ENCODE measurements at regions of chr3 and their contacts with region 1.

Region 1: GRCh38 chr3:66998113-66998903 is at the start of gene KBTBD8:
- DNase-seq: peak; percentile 92 to 99 (median 97)
- ATAC-seq: peak; percentile 94
- H3K4me3 ChIP-seq: peak within 1 kb of the TSS; percentile 62 to 94
- H3K4me3 Mint-ChIP-seq: peak within 1 kb of the TSS; percentile 86
- H3K27ac ChIP-seq: peak within 1 kb of the TSS; percentile 53 to 63
- H3K27ac Mint-ChIP-seq: peak within 1 kb of the TSS; percentile 92
- H3K4me1 ChIP-seq: peaks cover 10% of the 10 kb centered on the region
- H3K4me1 Mint-ChIP-seq: peaks cover 32% of the 10 kb centered on the region
- H3K27me3 ChIP-seq: no peaks in the 10 kb centered on the region
- H3K27me3 Mint-ChIP-seq: peaks cover 14% of the 10 kb centered on the region
- CTCF ChIP-seq: no peak
- total RNA-seq, gene KBTBD8: 9.5 to 12.1 TPM

Region 2: GRCh38 chr3:66047311-66048050 is 950.8 kb before region 1 on chr3:
- CTCF ChIA-PET with region 1: no interaction called
- POLR2A ChIA-PET with region 1: no interaction called
- intact Hi-C with region 1: no loop called
- DNase-seq: no peak
- ATAC-seq: no peak
- H3K4me3 ChIP-seq: no peak overlapping the region
- H3K4me3 Mint-ChIP-seq: no peak overlapping the region
- H3K27ac ChIP-seq: no peak overlapping the region
- H3K27ac Mint-ChIP-seq: no peak overlapping the region
- H3K4me1 ChIP-seq: no peaks in the 10 kb centered on the region
- H3K4me1 Mint-ChIP-seq: no peaks in the 10 kb centered on the region
- H3K27me3 ChIP-seq: no peaks in the 10 kb centered on the region
- H3K27me3 Mint-ChIP-seq: peaks cover 11% of the 10 kb centered on the region
- CTCF ChIP-seq: no peak

Region 3: DNA sequence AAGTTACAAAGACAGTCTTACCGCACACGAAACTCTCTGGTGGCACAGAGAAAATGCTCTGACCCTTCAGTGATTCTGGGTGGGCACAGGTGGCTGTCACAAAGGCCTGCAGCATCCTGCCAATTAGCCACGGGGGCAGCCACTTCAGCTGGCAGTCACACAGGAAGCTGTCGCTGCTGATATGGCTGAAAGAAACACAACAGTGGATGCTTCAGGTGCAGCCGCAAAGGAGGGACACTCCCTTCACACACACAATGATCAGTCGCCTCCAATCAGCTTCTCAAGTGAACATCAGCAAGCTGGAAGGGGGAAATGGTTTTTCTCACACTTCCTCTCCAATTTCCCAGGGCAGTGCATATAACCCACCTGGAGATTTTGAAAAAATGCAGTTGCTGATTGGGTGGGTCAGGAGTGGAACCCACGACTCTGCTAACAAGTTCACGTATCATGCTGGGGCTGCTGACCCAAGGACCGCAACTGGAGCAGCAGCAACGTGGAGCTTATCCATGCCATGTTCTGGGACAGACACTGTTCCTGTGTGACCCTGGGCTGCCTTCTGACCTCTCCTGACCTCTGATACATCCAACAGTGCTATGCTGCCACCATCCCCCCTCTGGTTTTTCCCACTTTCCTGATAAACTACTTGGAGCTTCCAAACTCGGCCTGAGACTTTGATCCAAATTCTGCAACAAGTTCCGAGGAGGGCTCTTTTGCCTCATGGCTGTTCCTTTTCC is 604.1 kb before region 1 on chr3:
- CTCF ChIA-PET with region 1: no interaction called
- POLR2A ChIA-PET with region 1: no interaction called
- intact Hi-C with region 1: loop called in 1 of 2 experiments (anchors 10 kb)
- DNase-seq: peak; percentile 32 to 84 (median 60)
- ATAC-seq: peak; percentile 93
- H3K4me3 ChIP-seq: peak overlapping the region; percentile 16 to 35
- H3K4me3 Mint-ChIP-seq: peak overlapping the region; percentile 85
- H3K27ac ChIP-seq: peak overlapping the region; percentile 57 to 72
- H3K27ac Mint-ChIP-seq: peak overlapping the region; percentile 95
- H3K4me1 ChIP-seq: peaks cover 24% of the 10 kb centered on the region
- H3K4me1 Mint-ChIP-seq: peaks cover 56% of the 10 kb centered on the region
- H3K27me3 ChIP-seq: no peaks in the 10 kb centered on the region
- H3K27me3 Mint-ChIP-seq: no peaks in the 10 kb centered on the region
- CTCF ChIP-seq: no peak

Region 4: DNA sequence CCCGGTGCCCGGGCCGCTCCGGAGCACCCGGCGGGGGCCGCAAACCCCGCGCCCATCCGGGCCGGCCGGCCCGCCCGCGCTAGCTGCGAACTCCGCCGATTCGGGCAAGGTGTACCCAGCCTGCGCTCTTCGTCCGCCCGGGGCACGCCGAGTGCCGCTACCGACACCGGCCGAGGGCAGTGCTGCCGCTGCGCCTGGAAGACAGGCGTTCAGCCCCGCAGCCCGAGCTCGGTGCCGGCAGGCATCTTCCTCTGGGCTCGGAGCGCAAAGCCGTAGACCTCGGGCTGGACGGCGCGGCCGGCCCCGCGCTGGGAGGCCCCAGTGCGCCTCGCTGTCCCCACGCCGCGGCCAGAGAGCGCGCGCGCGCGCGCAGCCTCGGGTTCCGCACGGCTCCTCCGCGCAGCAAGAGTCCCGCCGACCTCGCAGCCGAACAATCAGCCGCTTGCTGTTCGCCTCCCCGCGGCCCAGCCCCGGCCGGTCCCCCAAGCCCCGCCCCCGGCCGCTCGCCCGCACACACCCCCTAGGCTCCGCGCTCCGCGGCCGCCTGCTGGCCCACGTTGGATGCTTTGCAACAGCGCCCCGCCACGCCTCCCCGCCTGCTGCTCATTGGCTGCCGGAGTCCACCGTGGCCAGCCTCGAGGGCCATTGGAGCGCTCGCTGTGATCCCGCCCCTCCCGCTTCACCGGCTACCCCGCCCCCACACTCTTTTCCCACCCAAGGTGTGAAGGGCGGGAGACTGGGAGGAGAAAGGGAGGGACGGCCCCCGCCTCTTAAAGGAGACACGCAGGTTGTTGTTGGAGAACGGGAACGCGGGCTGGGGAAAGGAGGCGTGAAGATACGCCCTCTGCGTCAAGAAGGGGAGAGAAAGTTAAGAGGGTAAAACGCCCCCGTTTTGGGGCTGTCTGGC is 497.5 kb before region 1 on chr3 and contains the start of gene LRIG1:
- CTCF ChIA-PET with region 1: no interaction called
- POLR2A ChIA-PET with region 1: no interaction called
- intact Hi-C with region 1: loop called in 1 of 2 experiments (anchors 1 kb)
- DNase-seq: peak; percentile 95 to 98 (median 97)
- ATAC-seq: peak; percentile 94
- H3K4me3 ChIP-seq: peak within 1 kb of the TSS; percentile 54 to 66
- H3K4me3 Mint-ChIP-seq: peak within 1 kb of the TSS; percentile 94
- H3K27ac ChIP-seq: peak within 1 kb of the TSS in 1 of 2 experiments; percentile 29
- H3K27ac Mint-ChIP-seq: peak within 1 kb of the TSS; percentile 69
- H3K4me1 ChIP-seq: peaks cover 35% of the 10 kb centered on the region
- H3K4me1 Mint-ChIP-seq: peaks cover 60% of the 10 kb centered on the region
- H3K27me3 ChIP-seq: peaks cover 0 to 4% of the 10 kb centered on the region in 2 experiments
- H3K27me3 Mint-ChIP-seq: peaks cover 8% of the 10 kb centered on the region
- CTCF ChIP-seq: peak; percentile 54
- total RNA-seq, gene LRIG1: 38.2 to 39.4 TPM

Region 5: DNA sequence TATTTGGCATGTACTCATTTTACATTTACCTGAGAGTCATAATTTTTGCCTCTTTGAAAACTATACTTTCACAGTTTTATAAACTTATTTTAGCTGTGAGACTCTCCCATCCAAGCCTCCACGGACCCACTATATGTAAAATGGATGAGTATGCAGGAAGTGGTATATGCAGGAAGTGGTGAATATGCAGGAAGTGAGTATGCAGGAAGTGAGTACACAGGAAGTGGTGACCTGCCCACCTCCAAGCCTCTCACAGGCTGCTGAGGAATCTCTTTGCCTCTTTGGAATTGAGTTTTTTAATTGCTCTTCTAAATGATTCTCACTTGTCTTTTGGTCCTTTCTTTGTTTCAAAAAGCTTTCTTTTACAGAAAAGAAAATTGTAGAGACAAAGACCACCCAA is 85.0 kb after region 1 on chr3:
- CTCF ChIA-PET with region 1: no interaction called
- POLR2A ChIA-PET with region 1: no interaction called
- intact Hi-C with region 1: loop called in 1 of 2 experiments (anchors 1 kb)
- DNase-seq: peak in 8 of 9 experiments; percentile 7 to 78 (median 46)
- ATAC-seq: peak; percentile 95
- H3K4me3 ChIP-seq: peak overlapping the region in 1 of 2 experiments; percentile 29
- H3K4me3 Mint-ChIP-seq: peak overlapping the region; percentile 70
- H3K27ac ChIP-seq: peak overlapping the region; percentile 16 to 59
- H3K27ac Mint-ChIP-seq: peak overlapping the region; percentile 86
- H3K4me1 ChIP-seq: peaks cover 19% of the 10 kb centered on the region
- H3K4me1 Mint-ChIP-seq: peaks cover 22% of the 10 kb centered on the region
- H3K27me3 ChIP-seq: no peaks in the 10 kb centered on the region
- H3K27me3 Mint-ChIP-seq: no peaks in the 10 kb centered on the region
- CTCF ChIP-seq: no peak

Region 6: DNA sequence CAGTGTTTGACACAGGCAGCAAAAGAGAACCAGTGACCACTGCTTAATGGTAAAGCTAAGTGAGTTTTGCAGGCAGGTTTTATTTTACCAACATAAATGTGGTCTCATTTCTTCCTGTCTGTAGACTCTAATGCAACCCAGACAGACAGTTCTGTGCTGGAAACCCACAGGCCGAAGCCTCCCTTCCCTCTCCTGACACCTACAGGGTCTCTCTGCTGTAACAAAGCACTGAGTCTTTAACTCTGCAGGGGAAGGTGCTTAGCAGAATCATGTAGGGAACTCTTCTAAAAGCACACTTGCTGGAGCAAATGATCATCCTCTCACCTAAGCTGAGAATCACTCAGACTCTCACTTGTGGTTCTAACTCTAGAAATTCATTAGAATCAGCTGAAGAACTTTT is 200.1 kb after region 1 on chr3:
- CTCF ChIA-PET with region 1: no interaction called
- POLR2A ChIA-PET with region 1: no interaction called
- intact Hi-C with region 1: no loop called
- DNase-seq: no peak
- ATAC-seq: no peak
- H3K4me3 ChIP-seq: no peak overlapping the region
- H3K4me3 Mint-ChIP-seq: no peak overlapping the region
- H3K27ac ChIP-seq: no peak overlapping the region
- H3K27ac Mint-ChIP-seq: no peak overlapping the region
- H3K4me1 ChIP-seq: no peaks in the 10 kb centered on the region
- H3K4me1 Mint-ChIP-seq: no peaks in the 10 kb centered on the region
- H3K27me3 ChIP-seq: no peaks in the 10 kb centered on the region
- H3K27me3 Mint-ChIP-seq: no peaks in the 10 kb centered on the region
- CTCF ChIP-seq: no peak

Region 7: DNA sequence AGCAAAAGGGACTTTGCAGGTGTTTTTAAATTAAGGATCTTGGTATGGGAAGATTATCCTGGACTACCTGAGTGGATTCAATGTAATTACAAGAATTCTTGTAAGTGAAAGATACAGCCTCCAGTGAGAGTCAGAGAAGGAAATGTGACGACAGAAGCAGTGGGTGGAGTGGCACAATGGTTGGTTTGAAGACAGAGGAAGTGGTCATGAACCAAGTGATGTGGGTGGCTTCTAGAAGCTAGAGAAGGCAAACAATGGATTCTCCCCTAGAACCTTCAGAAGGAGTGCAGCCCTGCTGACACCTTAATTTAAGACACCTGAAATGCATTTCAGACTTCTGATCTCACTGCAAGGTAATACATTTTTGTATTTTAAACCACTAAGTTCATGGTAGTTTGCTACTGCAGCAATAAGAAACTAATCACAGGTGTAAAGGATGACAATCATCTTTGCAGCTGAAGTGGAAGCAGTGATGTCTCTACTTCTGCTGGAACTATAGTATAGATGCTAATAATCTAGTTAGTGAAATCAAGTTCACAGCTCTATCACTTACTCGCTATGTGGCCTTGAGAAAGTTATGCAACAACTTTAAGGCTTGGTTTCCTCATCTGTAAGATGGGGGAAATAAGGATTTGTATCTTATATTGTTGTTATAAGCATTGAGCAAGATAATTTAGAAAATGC is 1059.5 kb after region 1 on chr3:
- CTCF ChIA-PET with region 1: no interaction called
- POLR2A ChIA-PET with region 1: interaction called, 3 read pairs
- intact Hi-C with region 1: loop called in 1 of 2 experiments (anchors 1 kb)
- DNase-seq: peak; percentile 33 to 91 (median 66)
- ATAC-seq: peak; percentile 98
- H3K4me3 ChIP-seq: peak overlapping the region in 1 of 2 experiments; percentile 38
- H3K4me3 Mint-ChIP-seq: peak overlapping the region; percentile 59
- H3K27ac ChIP-seq: peak overlapping the region; percentile 6 to 44
- H3K27ac Mint-ChIP-seq: peak overlapping the region; percentile 79
- H3K4me1 ChIP-seq: peaks cover 59% of the 10 kb centered on the region
- H3K4me1 Mint-ChIP-seq: peaks cover 75% of the 10 kb centered on the region
- H3K27me3 ChIP-seq: no peaks in the 10 kb centered on the region
- H3K27me3 Mint-ChIP-seq: no peaks in the 10 kb centered on the region
- CTCF ChIP-seq: no peak

Measured in CD8-positive, alpha-beta T cell (primary cell).